ENCODE measurements at regions of chr2 and their contacts with region 1.

Region 1: GRCh38 chr2:117835990-117836760 is 21.7 kb downstream of the DDX18 start:
- H3K4me3 Mint-ChIP-seq: peak overlapping the region; percentile 73
- H3K27ac Mint-ChIP-seq: peak overlapping the region; percentile 59
- H3K4me1 Mint-ChIP-seq: peaks cover 16% of the 10 kb centered on the region
- H3K27me3 Mint-ChIP-seq: peaks cover 27% of the 10 kb centered on the region

Region 2: GRCh38 chr2:117774716-117775115 is 61.5 kb before region 1 on chr2:
- intact Hi-C with region 1: no loop called
- H3K4me3 Mint-ChIP-seq: no peak overlapping the region
- H3K27ac Mint-ChIP-seq: no peak overlapping the region
- H3K4me1 Mint-ChIP-seq: no peaks in the 10 kb centered on the region
- H3K27me3 Mint-ChIP-seq: no peaks in the 10 kb centered on the region

Region 3: DNA sequence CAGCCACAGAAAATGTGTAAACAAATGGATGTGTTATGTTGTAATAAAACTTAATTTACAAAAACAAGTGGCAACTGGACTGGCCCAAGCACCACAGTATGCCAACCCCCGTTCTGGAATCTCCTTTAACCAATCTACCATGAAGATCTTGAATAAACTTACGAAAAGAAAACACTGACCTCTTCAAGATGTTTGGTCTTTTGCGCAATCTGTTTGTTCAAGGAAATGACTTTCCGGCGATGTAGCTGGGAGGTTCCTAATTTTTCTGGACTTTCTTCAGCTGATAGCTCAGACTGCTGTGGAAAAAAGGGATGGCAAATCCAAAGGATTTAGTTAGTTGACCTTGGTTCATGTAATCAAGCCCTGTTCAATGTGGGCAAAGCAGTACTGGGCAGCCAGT is 122.0 kb after region 1 on chr2:
- intact Hi-C with region 1: no loop called
- H3K4me3 Mint-ChIP-seq: no peak overlapping the region
- H3K27ac Mint-ChIP-seq: no peak overlapping the region
- H3K4me1 Mint-ChIP-seq: peaks cover 12% of the 10 kb centered on the region
- H3K27me3 Mint-ChIP-seq: no peaks in the 10 kb centered on the region

Region 4: GRCh38 chr2:118061135-118061955 is 225.2 kb after region 1 on chr2:
- intact Hi-C with region 1: loop called (anchors 10 kb)
- H3K4me3 Mint-ChIP-seq: no peak overlapping the region
- H3K27ac Mint-ChIP-seq: peak overlapping the region; percentile 25
- H3K4me1 Mint-ChIP-seq: peaks cover 42% of the 10 kb centered on the region
- H3K27me3 Mint-ChIP-seq: no peaks in the 10 kb centered on the region

Measured in dendritic cell treated with granulocyte-macrophage colony-stimulating factor and Interleukin-4, amounts not matched to agents 40 ng/mL and 50 ng/mL, for 4 days (primary cell).